PC-9 (cell line): ENCODE measurements at regions of chr10 and their contacts with region 1.

Region 1: GRCh38 chr10:77949167-77949566 is 22.6 kb upstream of the DLG5 start:
- DNase-seq: peak; percentile 94 to 98
- H3K4me3 ChIP-seq: peak overlapping the region; percentile 7; the same call in 1 of the 2 replicates
- H3K27ac ChIP-seq: peak overlapping the region; percentile 85
- H3K4me1 ChIP-seq: peaks cover 47% of the 10 kb centered on the region
- H3K27me3 ChIP-seq: no peaks in the 10 kb centered on the region
- CTCF ChIP-seq: no peak

Region 2: DNA sequence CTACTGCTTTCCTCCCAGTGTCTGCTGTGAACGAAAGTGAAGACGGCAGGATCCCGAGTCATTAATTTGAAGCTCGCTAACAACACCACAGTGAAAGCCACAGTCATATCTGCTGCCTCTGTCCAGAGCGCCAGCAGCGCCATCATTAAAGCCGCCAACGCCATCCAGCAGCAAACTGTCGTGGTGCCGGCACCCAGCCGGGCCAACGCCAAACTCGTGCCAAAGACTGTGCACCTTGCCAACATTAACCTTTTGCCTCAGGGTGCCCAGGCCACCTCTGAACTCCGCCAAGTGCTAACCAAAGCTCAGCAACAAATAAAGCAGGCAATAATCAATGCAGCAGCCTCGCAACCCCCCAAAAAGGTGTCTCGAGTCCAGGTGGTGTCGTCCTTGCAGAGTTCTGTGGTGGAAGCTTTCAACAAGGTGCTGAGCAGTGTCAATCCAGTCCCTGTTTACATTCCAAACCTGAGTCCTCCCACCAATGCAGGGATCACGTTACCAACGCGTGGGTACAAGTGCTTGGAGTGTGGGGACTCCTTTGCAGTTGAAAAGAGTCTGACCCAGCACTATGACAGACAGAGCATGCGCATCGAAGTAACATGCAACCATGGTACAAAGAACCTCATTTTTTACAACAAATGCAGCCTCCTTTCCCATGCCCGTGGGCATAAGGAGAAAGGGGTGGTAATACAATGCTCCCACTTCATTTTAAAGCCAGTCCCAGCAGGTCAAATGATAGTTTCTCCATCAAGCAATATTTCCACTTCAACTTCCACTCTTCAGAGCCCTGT is 216.8 kb before region 1 on chr10:
- CTCF ChIA-PET with region 1: no interaction called
- POLR2A ChIA-PET with region 1: no interaction called
- intact Hi-C with region 1: no loop called
- DNase-seq: no peak
- H3K4me3 ChIP-seq: no peak overlapping the region
- H3K27ac ChIP-seq: no peak overlapping the region
- H3K4me1 ChIP-seq: peaks cover 4% of the 10 kb centered on the region; the same call in 1 of the 2 replicates
- H3K27me3 ChIP-seq: no peaks in the 10 kb centered on the region
- CTCF ChIP-seq: no peak

Region 3: GRCh38 chr10:77857254-77857653 is 91.9 kb before region 1 on chr10:
- CTCF ChIA-PET with region 1: no interaction called
- POLR2A ChIA-PET with region 1: no interaction called
- intact Hi-C with region 1: loop called (anchors 1 kb)
- DNase-seq: peak; percentile 92
- H3K4me3 ChIP-seq: no peak overlapping the region
- H3K27ac ChIP-seq: no peak overlapping the region
- H3K4me1 ChIP-seq: peaks cover 62% of the 10 kb centered on the region
- H3K27me3 ChIP-seq: no peaks in the 10 kb centered on the region
- CTCF ChIP-seq: no peak